Thyroid gland (tissue), 4 donors: ENCODE measurements at regions of chr1 and their contacts with region 1.

Region 1: DNA sequence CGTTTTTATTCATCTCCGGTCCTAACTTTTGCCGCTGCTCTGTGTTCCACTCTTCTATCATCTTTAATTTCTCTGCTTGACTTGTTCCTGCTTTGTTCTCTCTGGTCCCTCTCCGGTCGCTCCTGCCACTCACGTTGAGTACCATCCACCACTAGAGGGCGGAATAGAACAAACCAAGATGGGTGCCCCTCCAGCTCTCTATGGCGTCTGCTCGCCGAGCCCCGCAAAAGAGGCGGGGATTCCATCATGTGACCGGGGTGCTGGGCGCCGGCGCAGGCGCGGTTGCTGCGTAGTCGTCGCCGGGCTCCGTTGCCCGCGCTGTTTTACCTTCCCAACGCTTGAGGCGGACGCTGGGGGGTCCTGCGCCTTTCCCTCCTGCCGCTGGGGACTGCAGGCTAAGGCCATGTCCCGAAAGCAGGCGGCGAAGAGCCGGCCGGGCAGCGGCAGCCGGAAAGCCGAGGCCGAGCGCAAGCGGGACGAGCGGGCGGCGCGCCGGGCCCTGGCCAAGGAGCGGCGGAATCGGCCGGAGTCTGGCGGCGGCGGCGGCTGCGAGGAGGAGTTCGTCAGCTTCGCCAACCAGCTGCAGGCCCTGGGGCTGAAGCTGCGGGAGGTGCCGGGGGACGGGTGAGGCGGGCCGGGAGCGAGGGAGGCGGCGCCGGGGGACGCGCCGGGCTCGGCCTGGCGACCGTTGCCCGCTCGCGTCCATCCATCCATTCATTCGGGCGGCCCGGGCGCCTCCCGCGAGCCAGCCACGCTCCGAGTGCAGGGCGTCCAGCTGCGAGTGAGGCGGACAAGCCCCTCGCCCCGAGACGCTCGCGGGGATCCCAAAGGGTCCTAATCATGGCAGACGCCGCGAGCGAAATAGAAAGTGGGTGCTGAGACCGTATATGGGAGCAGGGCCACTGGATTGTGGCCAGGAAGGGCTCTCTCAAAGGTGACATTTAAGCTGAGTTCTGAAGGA is at the start of gene OTUD3:
- DNase-seq: peak; percentile 95 to 96
- H3K4me3 ChIP-seq: peak within 1 kb of the TSS; percentile 60 to 87 (median 73)
- H3K27ac ChIP-seq: peak within 1 kb of the TSS; percentile 82 to 87 (median 84)
- H3K4me1 ChIP-seq: peaks cover 12 to 23% of the 10 kb centered on the region in 2 donors
- H3K27me3 ChIP-seq: no peaks in the 10 kb centered on the region
- CTCF ChIP-seq: peak; percentile 51 to 94 (median 90)
- POLR2A ChIP-seq: peak in 1 of 2 donors; percentile 92
- total RNA-seq, gene OTUD3: 5.8 to 8.2 (median 6.7) TPM

Region 2: DNA sequence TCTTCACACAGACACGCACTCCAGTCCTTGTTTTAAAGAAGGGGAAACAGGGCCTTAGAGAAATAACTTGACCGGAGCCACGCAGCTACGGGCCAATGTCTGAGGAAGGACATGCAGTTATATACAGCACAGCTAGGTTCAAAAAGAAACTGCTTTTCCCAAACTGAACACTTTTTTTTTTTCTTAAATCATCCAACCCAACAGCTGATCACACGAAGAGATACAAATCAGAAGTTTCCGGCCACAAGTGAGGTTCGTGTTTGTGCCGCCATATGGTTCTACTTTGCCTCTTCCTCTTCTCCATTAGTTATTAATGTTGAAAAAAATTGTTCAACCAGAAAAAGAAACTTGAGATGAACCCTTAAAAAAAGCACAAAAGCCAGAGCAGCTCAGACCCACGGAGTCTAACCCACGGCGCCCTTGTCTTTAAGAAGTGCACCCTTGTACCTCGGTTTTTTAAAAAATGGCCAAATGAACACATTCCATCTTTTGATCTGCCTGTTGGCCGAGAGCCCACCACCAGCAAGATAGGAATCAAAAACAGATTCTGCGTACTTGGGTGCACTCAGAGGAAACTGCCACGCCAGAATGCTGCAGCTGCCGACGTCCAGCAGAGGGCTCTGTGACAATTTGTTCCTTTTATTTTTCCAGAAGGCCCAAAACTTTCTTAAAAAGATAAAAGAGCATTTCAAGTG is 491.3 kb before region 1 on chr1:
- intact Hi-C with region 1: no loop called
- DNase-seq: peak; percentile 79 to 85
- H3K4me3 ChIP-seq: no peak overlapping the region
- H3K27ac ChIP-seq: peak overlapping the region; percentile 56 to 74 (median 69)
- H3K4me1 ChIP-seq: peaks cover 44 to 56% of the 10 kb centered on the region in 2 donors
- H3K27me3 ChIP-seq: no peaks in the 10 kb centered on the region
- CTCF ChIP-seq: peak; percentile 78 to 90 (median 86)
- POLR2A ChIP-seq: no peak

Region 3: GRCh38 chr1:19704247-19705113 is 177.9 kb before region 1 on chr1:
- intact Hi-C with region 1: no loop called
- DNase-seq: peak; percentile 63 to 73
- H3K4me3 ChIP-seq: no peak overlapping the region
- H3K27ac ChIP-seq: no peak overlapping the region
- H3K4me1 ChIP-seq: peaks cover 0 to 7% of the 10 kb centered on the region in 2 donors
- H3K27me3 ChIP-seq: no peaks in the 10 kb centered on the region
- CTCF ChIP-seq: peak; percentile 63 to 93 (median 80)
- POLR2A ChIP-seq: no peak

Region 4: DNA sequence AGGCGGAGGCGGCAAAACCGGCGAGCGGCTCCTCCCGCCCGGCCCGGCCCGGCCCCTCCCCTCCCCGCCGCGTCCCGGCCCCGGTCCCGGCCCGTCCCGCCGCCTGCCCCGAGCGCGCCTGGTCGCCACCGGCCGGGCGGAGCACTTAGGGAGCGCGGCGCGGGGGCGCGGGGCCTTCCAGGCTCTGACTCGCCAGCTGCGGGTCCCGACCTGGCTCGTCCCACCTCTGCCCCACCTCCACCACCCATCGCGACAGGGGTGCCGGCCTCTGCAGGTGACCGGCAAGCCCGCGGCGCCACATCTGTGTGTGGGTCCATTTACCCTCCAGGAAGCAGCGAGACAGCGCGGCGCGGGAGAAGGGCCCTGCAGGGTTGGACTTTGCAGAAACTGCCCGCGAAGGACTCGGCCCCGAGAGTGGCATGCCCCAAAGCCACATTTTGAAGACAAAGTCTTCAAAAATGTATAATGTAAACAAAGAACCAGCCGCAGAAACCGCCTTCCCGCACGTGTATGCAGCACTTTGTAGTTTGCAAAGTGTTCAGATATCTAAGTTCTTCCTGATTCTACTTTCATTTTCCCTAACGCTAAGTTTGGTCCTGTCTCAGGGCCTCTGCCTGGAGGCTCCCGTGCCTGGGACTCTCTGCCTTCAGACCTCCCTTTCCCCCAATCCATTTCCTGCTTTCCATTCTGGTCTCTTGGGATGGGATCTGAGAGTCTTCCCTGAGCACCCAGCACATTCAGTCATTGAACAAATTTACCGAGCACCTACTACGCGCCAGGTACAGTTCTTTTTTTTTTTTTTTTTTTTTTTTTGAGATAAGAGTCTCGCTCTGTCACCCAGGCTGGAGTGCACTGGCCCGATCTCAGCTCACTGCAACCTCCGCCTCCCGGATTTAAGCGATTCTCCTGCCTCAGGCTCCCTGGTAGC is 82.2 kb before region 1 on chr1 and contains the start of gene TMCO4:
- intact Hi-C with region 1: loop called (anchors 10 kb)
- DNase-seq: peak; percentile 63 to 66
- H3K4me3 ChIP-seq: peak within 1 kb of the TSS; percentile 38 to 65 (median 56)
- H3K27ac ChIP-seq: peak within 1 kb of the TSS; percentile 87 to 97 (median 93)
- H3K4me1 ChIP-seq: peaks cover 15% of the 10 kb centered on the region in 2 donors
- H3K27me3 ChIP-seq: no peaks in the 10 kb centered on the region
- CTCF ChIP-seq: no peak
- POLR2A ChIP-seq: no peak
- total RNA-seq, gene TMCO4: 34.3 to 67.7 (median 61.4) TPM

Region 5: DNA sequence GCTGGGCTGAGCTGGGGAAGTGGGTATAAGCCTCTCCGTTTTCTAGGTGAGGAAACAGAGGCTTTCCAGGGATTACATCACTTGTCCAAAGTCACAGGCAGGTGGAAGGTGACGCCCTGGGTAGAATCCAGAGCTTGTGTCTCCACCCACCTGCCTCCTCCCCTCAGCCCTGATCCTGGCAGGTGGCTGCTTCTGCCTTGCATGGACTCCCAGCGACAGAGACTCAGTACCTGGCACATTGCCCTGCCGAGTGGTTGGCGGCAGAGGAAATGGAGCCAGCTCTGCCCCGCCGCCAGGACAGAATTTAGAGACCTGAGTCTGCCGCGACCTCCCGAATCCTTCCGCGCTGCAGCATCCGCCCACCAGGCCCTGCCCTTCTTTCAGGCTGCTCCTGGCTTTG is 38.9 kb after region 1 on chr1:
- intact Hi-C with region 1: no loop called
- DNase-seq: peak; percentile 5 to 35
- H3K4me3 ChIP-seq: no peak overlapping the region
- H3K27ac ChIP-seq: no peak overlapping the region
- H3K4me1 ChIP-seq: no peaks in the 10 kb centered on the region
- H3K27me3 ChIP-seq: no peaks in the 10 kb centered on the region
- CTCF ChIP-seq: no peak
- POLR2A ChIP-seq: no peak